AG04449 (cell line): ENCODE measurements at regions of chr3 and their contacts with region 1.

Region 1: GRCh38 chr3:37779289-37780152 is 82.2 kb upstream of the CTDSPL start:
- DNase-seq: peak; percentile 28
- H3K4me3 ChIP-seq: no peak overlapping the region
- CTCF ChIP-seq: peak; percentile 81

Region 2: DNA sequence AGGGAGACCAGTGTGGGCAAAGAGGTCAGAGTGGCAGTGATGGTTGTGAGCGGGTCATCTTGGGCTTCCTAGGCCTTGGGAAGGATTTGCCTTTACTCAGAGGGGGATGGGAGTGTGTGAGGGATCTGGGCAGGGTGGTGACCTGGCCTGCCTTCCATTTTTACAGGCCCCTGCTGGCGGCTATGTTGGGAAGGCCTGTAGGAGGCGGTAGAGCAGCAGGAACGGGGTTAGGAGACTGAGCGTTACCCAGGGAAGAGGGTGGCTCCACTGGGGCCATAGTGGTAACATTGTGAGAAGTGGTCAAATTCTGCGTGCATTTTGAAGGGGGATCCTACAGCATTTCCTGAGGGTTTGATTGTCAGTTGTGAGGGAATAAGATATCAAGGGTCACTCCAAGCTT is 225.2 kb before region 1 on chr3:
- CTCF ChIA-PET with region 1: no interaction called
- POLR2A ChIA-PET with region 1: no interaction called
- DNase-seq: no peak
- H3K4me3 ChIP-seq: no peak overlapping the region
- CTCF ChIP-seq: no peak

Region 3: DNA sequence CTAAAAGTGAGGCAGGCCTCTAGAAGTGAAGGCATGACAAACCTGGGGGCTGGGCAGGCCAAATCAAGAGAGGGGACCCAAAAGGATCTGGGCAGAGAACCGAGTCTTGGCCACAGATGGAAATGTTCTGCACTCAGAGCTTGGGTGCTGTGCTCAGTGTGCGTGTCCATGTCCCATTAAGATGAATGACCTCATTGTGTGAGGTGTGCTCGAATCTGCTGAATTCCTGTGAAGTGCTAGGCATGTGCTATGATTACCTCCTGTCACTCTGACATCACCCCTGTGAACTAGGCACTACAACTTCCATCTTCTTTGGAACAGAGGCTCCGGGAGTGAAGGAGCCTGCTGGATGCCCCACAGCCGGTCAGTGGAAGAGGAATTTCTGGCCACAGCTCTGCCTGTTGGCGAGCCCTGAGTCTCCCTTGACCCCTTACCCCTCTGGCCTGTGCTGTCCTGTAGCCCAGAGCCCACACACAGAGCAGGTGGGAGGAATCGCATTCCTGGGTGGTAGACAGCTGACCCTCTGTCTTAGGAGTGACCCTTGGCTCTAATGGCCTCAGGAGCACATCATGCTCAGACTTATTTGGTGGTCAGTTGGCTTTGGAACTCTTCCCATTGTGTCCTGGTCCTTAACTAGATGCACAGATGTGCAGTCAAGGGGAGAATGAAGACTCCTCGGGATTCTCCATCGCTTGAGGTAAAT is 14.5 kb after region 1 on chr3:
- CTCF ChIA-PET with region 1: interaction called, 20 read pairs
- POLR2A ChIA-PET with region 1: no interaction called
- DNase-seq: no peak
- H3K4me3 ChIP-seq: no peak overlapping the region
- CTCF ChIP-seq: no peak